ENCODE measurements at regions of chr19 and their contacts with region 1.

Region 1: GRCh38 chr19:54035215-54036178 is 28.2 kb downstream of the VSTM1 start:
- DNase-seq: no peak
- ATAC-seq: no peak

Region 2: GRCh38 chr19:54209811-54210494 is 174.5 kb after region 1 on chr19:
- intact Hi-C with region 1: no loop called
- DNase-seq: peak; percentile 92
- ATAC-seq: peak; percentile 87

Region 3: GRCh38 chr19:55536951-55537740 is 1501.6 kb after region 1 on chr19 and contains the start of gene SBK2:
- intact Hi-C with region 1: loop called (anchors 5 kb)
- DNase-seq: no peak
- ATAC-seq: no peak
- total RNA-seq, gene SBK2: not detected

Measured in sciatic nerve (tissue), 2 donors.